ENCODE measurements at regions of chr1 and their contacts with region 1.

Region 1: DNA sequence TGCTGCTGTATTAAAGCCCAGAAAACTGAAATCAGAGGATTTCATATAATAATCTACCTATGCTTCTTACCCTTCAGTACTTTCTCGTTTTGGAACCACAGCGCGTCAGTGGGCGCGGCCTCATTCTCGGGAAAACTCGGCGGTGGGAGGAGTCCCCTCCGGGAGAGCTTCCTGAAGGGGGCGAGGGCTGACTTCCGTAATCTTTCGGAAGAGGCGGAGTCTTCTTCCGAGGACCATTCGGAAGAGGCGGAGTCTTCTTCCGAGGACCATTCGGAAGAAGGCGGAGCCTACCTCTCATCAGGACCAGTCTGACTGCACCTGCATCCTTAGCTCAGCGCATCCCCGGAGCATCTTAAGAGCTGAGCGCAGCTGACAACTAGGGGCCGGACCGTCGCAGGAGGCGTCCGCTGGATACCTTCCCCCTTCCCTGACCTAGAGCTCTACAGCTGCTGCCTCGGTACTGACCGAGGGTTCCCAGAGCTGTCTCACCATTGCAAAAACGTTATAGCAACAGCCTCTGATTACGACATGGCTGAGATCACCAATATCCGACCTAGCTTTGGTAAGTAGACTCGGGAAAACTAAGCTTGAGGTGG is at the start of gene SYT11:
- DNase-seq: peak; percentile 90
- H3K4me3 Mint-ChIP-seq: peak within 1 kb of the TSS; percentile 85
- H3K27ac Mint-ChIP-seq: peak within 1 kb of the TSS; percentile 92
- H3K4me1 Mint-ChIP-seq: peaks cover 41% of the 10 kb centered on the region
- H3K27me3 Mint-ChIP-seq: no peaks in the 10 kb centered on the region
- total RNA-seq, gene SYT11: 22.3 and 23.3 TPM in 2 replicates

Region 2: DNA sequence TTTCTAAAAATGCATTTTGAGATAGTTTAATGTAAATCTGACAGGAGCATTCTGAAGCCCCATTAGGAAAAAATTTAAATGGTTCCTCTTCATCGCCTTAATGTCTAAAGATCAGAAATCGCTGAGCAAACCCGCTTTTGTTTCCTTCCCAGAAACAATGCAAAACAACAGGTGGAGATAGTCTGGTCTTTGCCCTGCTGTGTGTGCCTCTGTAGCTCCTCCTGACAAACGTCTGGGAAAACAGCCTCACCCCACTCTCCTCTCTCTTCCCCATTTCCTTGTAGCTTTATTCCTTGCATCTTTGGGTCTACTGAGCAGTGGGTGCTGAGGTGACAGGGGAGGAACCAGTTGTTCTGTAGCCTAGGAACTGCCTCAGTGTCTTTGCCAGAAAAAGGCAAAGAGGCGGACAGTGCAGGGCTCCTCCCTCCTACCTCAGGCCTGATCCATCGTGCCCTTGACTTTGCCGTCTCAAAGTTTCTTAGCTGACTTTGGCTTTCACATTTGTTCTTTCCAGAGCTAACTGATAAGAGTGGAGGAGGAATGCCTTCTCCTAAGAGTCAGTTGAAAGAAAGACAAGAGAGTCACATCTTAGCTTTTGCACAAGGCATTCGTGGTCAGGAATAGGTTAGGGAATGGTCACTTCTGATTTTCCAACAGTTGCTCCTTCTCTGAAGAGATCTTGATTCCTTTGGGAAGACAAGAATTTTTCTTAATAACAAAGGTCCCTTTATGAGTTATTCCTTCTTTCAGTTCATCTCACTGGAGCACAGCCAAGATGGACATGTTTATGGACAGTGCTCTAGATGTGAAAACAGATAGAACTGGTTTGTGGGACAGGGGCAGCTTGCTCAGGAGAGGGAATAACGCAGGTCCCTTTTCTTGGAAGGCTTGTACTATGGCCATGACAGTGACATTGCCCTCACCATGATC is 25.0 kb after region 1 on chr1:
- intact Hi-C with region 1: no loop called
- DNase-seq: no peak
- H3K4me3 Mint-ChIP-seq: no peak overlapping the region
- H3K27ac Mint-ChIP-seq: no peak overlapping the region
- H3K4me1 Mint-ChIP-seq: no peaks in the 10 kb centered on the region
- H3K27me3 Mint-ChIP-seq: no peaks in the 10 kb centered on the region

Region 3: GRCh38 chr1:155911156-155912055 is 52.1 kb after region 1 on chr1 and contains the start of gene RIT1:
- intact Hi-C with region 1: loop called (anchors 1 kb)
- DNase-seq: peak; percentile 79
- H3K4me3 Mint-ChIP-seq: peak within 1 kb of the TSS; percentile 92
- H3K27ac Mint-ChIP-seq: peak within 1 kb of the TSS; percentile 94
- H3K4me1 Mint-ChIP-seq: peaks cover 17% of the 10 kb centered on the region
- H3K27me3 Mint-ChIP-seq: no peaks in the 10 kb centered on the region
- total RNA-seq, gene RIT1: 20.0 and 27.0 TPM in 2 replicates